Adrenal gland (tissue), 19 donors: ENCODE measurements at regions of chr7 and their contacts with region 1.

Region 1: GRCh38 chr7:82044497-82045080 is 274.7 kb upstream of the HGF start:
- DNase-seq: peak; percentile 41 to 80 (median 51)
- H3K4me3 ChIP-seq: no peak overlapping the region
- H3K27ac ChIP-seq: no peak overlapping the region
- H3K4me1 ChIP-seq: peaks cover 0 to 25% of the 10 kb centered on the region in 2 donors
- H3K27me3 ChIP-seq: no peaks in the 10 kb centered on the region
- CTCF ChIP-seq: peak; percentile 76 to 90 (median 78)
- POLR2A ChIP-seq: no peak

Region 2: GRCh38 chr7:81256991-81257390 is 787.6 kb before region 1 on chr7:
- intact Hi-C with region 1: no loop called
- DNase-seq: no peak
- H3K4me3 ChIP-seq: no peak overlapping the region
- H3K27ac ChIP-seq: no peak overlapping the region
- H3K4me1 ChIP-seq: no peaks in the 10 kb centered on the region
- H3K27me3 ChIP-seq: no peaks in the 10 kb centered on the region
- CTCF ChIP-seq: peak in 3 of 6 experiments; percentile 9 to 27 (median 15)
- POLR2A ChIP-seq: no peak

Region 3: GRCh38 chr7:81704595-81704994 is 340.0 kb before region 1 on chr7:
- intact Hi-C with region 1: no loop called
- DNase-seq: no peak
- H3K4me3 ChIP-seq: no peak overlapping the region
- H3K27ac ChIP-seq: no peak overlapping the region
- H3K4me1 ChIP-seq: no peaks in the 10 kb centered on the region
- H3K27me3 ChIP-seq: no peaks in the 10 kb centered on the region
- CTCF ChIP-seq: no peak
- POLR2A ChIP-seq: no peak

Region 4: GRCh38 chr7:82131215-82131614 is 86.6 kb after region 1 on chr7:
- intact Hi-C with region 1: no loop called
- DNase-seq: no peak
- H3K4me3 ChIP-seq: no peak overlapping the region
- H3K27ac ChIP-seq: no peak overlapping the region
- H3K4me1 ChIP-seq: peaks cover 9 to 18% of the 10 kb centered on the region in 2 donors
- H3K27me3 ChIP-seq: no peaks in the 10 kb centered on the region
- CTCF ChIP-seq: no peak
- POLR2A ChIP-seq: no peak

Region 5: GRCh38 chr7:82605247-82605872 is 560.8 kb after region 1 on chr7:
- intact Hi-C with region 1: loop called in 1 of 2 experiments (anchors 10 kb)
- DNase-seq: peak in 6 of 7 donors; percentile 17 to 64 (median 48)
- H3K4me3 ChIP-seq: no peak overlapping the region
- H3K27ac ChIP-seq: no peak overlapping the region
- H3K4me1 ChIP-seq: no peaks in the 10 kb centered on the region
- H3K27me3 ChIP-seq: no peaks in the 10 kb centered on the region
- CTCF ChIP-seq: peak; percentile 29 to 75 (median 62)
- POLR2A ChIP-seq: no peak